ENCODE measurements at regions of chr20 and their contacts with region 1.

Region 1: DNA sequence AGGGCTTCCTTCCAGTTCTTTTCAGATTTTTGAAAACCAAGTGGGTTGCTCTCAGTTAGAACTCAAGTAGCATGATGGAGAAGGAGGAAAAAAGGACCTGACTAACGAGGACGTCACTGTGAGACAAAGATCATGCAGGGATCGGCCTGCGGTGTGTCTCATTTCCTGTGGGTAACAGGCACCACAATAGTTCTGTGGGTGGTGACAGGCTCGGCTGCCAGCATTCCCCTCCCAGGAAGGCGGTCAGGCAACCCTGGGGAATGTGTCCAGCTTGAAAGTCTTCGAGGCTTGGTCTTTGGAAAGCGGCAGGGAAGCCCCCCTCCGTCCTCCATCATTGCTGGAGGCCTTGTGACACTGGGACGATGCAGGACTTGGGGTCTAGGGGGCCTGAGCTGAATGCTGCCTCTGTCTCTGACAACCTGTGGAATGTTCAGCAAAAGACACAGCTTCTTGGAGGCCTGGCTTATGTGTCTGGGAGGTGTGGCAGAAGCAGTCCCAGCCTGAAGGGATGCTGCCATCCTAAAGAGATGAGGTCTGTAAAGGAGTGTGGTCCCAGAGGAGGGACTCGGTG is 121.0 kb downstream of the BCAS1 start:
- DNase-seq: peak; percentile 75
- H3K4me3 Mint-ChIP-seq: peak overlapping the region; percentile 72
- H3K27ac Mint-ChIP-seq: peak overlapping the region; percentile 92
- H3K4me1 Mint-ChIP-seq: peaks cover 35% of the 10 kb centered on the region
- H3K27me3 Mint-ChIP-seq: no peaks in the 10 kb centered on the region

Region 2: DNA sequence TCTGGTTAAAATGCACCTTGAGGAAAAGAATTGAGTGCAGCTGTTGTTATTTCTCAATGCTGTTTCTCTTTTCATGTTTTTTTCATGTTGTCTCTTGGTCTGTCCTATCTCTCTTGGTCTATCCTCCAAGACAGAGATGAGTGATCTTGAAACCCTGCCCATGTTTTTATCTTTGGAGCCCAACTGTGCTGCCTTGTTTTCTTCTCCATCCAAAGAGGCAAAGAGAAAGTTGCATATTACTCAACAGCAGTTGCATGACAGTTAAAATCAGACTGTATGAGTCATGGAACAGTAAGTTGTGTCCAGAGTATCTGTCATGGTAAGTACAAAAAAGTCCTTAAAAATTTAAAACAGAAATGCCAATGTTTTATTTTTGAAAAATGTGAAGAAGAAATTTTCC is 94.8 kb after region 1 on chr20:
- intact Hi-C with region 1: loop called (anchors 5 kb)
- DNase-seq: no peak
- H3K4me3 Mint-ChIP-seq: no peak overlapping the region
- H3K27ac Mint-ChIP-seq: peak overlapping the region; percentile 82
- H3K4me1 Mint-ChIP-seq: peaks cover 23% of the 10 kb centered on the region
- H3K27me3 Mint-ChIP-seq: peaks cover 4% of the 10 kb centered on the region

Region 3: DNA sequence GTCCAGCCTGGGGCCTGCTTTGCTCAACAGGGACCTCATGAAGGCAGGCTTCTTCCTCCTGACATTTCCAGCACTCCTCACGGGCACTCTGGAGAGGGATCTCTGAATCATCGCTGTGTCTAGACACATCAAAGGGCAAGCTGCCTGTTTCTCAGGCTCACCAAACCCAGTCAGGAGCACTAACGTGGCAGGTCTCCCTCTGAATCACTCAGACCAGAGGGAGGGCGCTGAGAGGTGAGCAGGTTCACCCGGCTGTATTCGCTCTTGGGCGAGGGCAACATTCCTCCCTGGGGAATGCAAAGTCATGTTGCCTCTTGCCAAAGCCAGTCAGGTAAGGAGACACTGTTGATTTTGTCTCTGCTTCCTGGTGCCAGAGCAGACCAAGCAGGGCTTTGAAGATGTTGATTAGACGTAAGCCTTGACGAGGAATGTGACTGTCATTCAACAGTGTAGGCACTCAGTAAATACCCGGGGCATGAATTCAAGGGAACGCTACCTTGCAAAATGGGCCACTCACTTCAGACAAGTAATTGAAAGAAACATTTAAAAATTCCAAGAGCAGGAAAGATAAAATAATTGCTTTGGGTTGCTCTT is 174.3 kb after region 1 on chr20:
- intact Hi-C with region 1: no loop called
- DNase-seq: no peak
- H3K4me3 Mint-ChIP-seq: no peak overlapping the region
- H3K27ac Mint-ChIP-seq: no peak overlapping the region
- H3K4me1 Mint-ChIP-seq: no peaks in the 10 kb centered on the region
- H3K27me3 Mint-ChIP-seq: peaks cover 4% of the 10 kb centered on the region

Region 4: DNA sequence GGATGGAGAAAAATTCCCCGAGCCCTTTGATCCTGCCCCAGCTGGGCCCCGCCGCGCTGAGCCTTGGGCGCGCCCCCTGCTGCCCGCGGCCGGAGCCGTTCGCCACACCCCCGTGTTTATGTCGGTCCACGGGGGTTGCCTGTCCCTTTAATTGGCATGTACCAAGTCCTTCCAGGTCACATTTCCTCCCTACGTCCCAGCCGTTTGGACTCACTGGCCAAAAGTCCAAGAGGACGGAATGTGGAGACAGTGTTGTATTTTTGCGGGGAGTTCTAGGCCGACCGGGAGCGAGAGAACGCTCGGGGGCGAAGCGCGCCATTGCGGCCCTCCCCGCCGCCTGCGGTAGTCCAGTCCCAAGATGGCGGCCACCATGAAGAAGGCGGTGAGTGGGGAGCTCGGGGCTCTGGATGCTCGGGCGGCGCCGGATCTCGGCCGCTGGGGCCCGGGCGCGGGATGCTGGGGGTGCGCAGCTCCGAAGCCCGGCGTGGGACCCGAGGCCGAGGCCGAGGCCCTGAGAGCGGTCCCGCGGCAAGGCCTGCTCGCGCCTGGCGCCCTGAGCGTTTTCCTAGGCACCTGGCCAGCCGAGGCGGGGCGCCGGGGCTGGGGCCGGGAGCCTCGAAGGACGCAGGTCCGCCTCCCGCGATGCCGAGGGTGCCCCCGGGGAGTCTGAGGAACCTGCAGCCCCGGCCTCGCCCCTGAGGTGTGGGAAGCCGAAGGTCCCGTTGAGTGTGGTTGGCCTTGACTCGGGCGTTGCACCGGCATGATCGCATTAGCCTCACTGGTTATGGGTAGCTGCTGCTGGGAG is 258.5 kb after region 1 on chr20 and contains the start of gene PFDN4:
- intact Hi-C with region 1: loop called (anchors 5 kb)
- DNase-seq: peak; percentile 79
- H3K4me3 Mint-ChIP-seq: peak within 1 kb of the TSS; percentile 96
- H3K27ac Mint-ChIP-seq: peak within 1 kb of the TSS; percentile 99
- H3K4me1 Mint-ChIP-seq: peaks cover 31% of the 10 kb centered on the region
- H3K27me3 Mint-ChIP-seq: no peaks in the 10 kb centered on the region
- total RNA-seq, gene PFDN4: 72.6 and 75.8 TPM in 2 replicates

Region 5: DNA sequence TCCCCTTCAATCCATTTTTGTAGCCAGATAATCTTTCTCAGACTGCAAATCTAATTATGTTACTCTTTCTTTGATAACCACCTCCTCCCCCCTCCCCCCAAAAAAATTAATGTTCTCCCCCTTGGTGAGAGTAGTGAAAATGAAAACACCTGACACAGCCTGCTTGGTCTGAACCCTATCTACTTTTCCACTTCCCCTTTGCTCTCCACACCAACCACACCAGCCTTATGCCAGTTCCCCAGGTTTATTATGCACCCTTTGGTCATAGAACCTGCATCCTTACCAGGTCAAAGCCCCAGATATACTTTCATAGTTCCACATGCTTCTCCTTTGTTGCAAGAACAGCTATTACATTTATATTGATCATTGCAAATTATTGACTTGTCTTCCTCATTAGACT is 277.8 kb after region 1 on chr20:
- intact Hi-C with region 1: no loop called
- DNase-seq: no peak
- H3K4me3 Mint-ChIP-seq: no peak overlapping the region
- H3K27ac Mint-ChIP-seq: no peak overlapping the region
- H3K4me1 Mint-ChIP-seq: peaks cover 11% of the 10 kb centered on the region
- H3K27me3 Mint-ChIP-seq: peaks cover 3% of the 10 kb centered on the region